Activated naive CD4-positive, alpha-beta T cell treated with anti-CD3 and anti-CD28 coated beads for 36 hours (primary cell): ENCODE measurements at regions of chr1 and their contacts with region 1.

Region 1: DNA sequence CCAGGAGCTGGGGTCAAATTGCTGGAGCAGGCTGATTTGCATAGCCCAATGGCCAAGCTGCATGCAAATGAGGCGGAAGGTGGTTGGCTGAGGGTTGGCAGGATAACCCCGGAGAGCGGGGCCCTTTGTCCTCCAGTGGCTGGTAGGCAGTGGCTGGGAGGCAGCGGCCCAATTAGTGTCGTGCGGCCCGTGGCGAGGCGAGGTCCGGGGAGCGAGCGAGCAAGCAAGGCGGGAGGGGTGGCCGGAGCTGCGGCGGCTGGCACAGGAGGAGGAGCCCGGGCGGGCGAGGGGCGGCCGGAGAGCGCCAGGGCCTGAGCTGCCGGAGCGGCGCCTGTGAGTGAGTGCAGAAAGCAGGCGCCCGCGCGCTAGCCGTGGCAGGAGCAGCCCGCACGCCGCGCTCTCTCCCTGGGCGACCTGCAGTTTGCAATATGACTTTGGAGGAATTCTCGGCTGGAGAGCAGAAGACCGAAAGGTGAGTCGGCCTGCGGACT is at the start of gene GADD45A:
- DNase-seq: peak; percentile 98
- H3K4me3 Mint-ChIP-seq: peak within 1 kb of the TSS; percentile 90
- H3K27ac Mint-ChIP-seq: peak within 1 kb of the TSS; percentile 92
- H3K4me1 Mint-ChIP-seq: peaks cover 46% of the 10 kb centered on the region
- H3K27me3 Mint-ChIP-seq: no peaks in the 10 kb centered on the region
- total RNA-seq, gene GADD45A: 47.0 to 48.3 TPM

Region 2: DNA sequence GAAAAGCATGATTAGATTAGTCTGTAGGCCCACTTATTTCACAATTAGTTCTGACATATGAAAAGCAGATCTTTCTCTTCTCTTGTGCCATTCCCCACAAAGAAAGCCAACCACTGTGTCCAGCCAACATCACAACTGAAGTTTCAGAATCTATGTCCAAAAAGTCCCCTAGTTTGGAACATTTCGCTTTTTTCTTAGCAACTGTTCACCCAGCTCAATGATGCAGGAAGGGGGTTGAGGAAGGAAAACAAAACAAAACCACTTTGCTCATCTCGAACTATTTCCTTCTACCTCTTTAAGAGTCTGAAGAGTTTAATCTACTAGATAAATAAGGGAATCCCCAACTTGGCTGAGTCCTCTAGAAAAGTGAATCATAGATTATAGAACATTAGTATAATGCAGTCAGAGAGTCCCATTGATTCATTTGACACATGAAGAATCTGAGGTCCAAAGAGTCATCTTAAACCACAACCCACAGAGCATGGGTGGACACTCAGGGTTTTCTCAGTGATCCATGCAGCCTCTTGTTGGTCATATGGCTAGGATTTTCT is 1310.5 kb before region 1 on chr1:
- CTCF ChIA-PET with region 1: no interaction called
- intact Hi-C with region 1: loop called (anchors 10 kb)
- DNase-seq: peak; percentile 77
- H3K4me3 Mint-ChIP-seq: peak overlapping the region; percentile 50
- H3K27ac Mint-ChIP-seq: peak overlapping the region; percentile 94
- H3K4me1 Mint-ChIP-seq: peaks cover 76% of the 10 kb centered on the region
- H3K27me3 Mint-ChIP-seq: no peaks in the 10 kb centered on the region

Region 3: GRCh38 chr1:67053785-67054772 is 631.0 kb before region 1 on chr1 and contains the start of gene SLC35D1:
- CTCF ChIA-PET with region 1: no interaction called
- intact Hi-C with region 1: loop called (anchors 1 kb)
- DNase-seq: peak; percentile 81
- H3K4me3 Mint-ChIP-seq: peak within 1 kb of the TSS; percentile 82
- H3K27ac Mint-ChIP-seq: peak within 1 kb of the TSS; percentile 93
- H3K4me1 Mint-ChIP-seq: peaks cover 19% of the 10 kb centered on the region
- H3K27me3 Mint-ChIP-seq: no peaks in the 10 kb centered on the region
- total RNA-seq, gene SLC35D1: 10.5 to 11.1 TPM

Region 4: DNA sequence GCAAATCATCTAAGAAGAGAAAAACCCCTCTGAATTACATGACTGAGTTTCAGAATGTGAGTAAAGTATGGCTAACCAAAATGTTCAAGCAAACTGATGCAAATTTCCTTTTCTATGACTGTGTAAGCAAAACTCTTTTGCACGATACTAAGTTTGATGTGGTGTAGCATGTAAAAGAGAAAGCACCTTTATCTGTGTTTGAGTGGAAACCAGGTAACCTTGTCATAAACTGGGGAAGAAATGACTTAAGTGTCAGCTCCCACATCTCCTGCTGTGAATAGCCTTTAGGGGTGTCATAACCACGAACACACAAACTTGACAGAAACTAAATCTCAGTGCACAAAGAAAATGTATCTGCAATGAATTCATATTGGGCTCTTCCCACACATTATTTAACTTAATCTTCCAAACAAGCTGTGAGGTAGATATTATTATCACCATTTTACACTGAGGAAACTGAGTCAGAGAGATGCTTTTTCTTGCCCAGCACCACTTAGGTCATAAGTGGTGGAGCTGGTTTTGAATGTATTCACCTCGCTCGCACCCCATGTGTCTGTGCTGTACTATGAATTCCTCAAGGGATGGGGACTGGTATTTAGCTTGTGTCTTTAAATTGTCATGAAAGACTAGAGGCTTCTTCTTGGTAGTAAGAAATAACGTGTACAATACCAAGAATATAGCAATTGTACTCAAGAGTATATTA is 410.3 kb before region 1 on chr1:
- CTCF ChIA-PET with region 1: interaction called, 3 read pairs
- intact Hi-C with region 1: loop called (anchors 1 kb)
- DNase-seq: peak; percentile 55
- H3K4me3 Mint-ChIP-seq: no peak overlapping the region
- H3K27ac Mint-ChIP-seq: peak overlapping the region; percentile 90
- H3K4me1 Mint-ChIP-seq: peaks cover 55% of the 10 kb centered on the region
- H3K27me3 Mint-ChIP-seq: no peaks in the 10 kb centered on the region

Region 5: GRCh38 chr1:67535474-67535873 is 149.6 kb before region 1 on chr1:
- CTCF ChIA-PET with region 1: interaction called, 4 read pairs
- intact Hi-C with region 1: loop called (anchors 1 kb)
- DNase-seq: peak; percentile 81
- H3K4me3 Mint-ChIP-seq: no peak overlapping the region
- H3K27ac Mint-ChIP-seq: no peak overlapping the region
- H3K4me1 Mint-ChIP-seq: no peaks in the 10 kb centered on the region
- H3K27me3 Mint-ChIP-seq: peaks cover 4% of the 10 kb centered on the region

Region 6: GRCh38 chr1:67572271-67573221 is 112.6 kb before region 1 on chr1:
- CTCF ChIA-PET with region 1: no interaction called
- intact Hi-C with region 1: no loop called
- DNase-seq: no peak
- H3K4me3 Mint-ChIP-seq: no peak overlapping the region
- H3K27ac Mint-ChIP-seq: no peak overlapping the region
- H3K4me1 Mint-ChIP-seq: no peaks in the 10 kb centered on the region
- H3K27me3 Mint-ChIP-seq: no peaks in the 10 kb centered on the region

Region 7: DNA sequence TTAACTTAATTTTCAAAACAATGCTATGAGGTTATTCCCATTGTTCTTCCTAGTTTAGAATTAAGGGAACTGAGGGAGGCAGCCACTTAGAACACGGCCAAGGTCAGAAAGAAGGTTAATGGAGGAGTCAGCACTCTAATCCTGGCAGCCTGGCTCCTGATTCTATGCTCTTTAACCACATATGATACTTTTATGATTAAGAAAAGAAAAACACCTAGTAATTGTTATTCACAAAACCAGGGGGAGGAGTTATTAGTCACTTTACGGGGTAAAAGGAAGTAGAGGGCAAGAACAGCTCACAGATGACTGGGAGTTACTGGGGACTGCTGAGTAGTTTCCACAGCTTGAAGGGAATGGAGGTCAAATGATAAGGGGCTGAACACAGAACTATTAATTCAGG is 38.5 kb after region 1 on chr1:
- CTCF ChIA-PET with region 1: no interaction called
- intact Hi-C with region 1: loop called (anchors 1 kb)
- DNase-seq: peak; percentile 58
- H3K4me3 Mint-ChIP-seq: no peak overlapping the region
- H3K27ac Mint-ChIP-seq: no peak overlapping the region
- H3K4me1 Mint-ChIP-seq: peaks cover 8% of the 10 kb centered on the region
- H3K27me3 Mint-ChIP-seq: no peaks in the 10 kb centered on the region